K562 (cell line): ENCODE measurements at regions of chr20 and their contacts with region 1.

Region 1: DNA sequence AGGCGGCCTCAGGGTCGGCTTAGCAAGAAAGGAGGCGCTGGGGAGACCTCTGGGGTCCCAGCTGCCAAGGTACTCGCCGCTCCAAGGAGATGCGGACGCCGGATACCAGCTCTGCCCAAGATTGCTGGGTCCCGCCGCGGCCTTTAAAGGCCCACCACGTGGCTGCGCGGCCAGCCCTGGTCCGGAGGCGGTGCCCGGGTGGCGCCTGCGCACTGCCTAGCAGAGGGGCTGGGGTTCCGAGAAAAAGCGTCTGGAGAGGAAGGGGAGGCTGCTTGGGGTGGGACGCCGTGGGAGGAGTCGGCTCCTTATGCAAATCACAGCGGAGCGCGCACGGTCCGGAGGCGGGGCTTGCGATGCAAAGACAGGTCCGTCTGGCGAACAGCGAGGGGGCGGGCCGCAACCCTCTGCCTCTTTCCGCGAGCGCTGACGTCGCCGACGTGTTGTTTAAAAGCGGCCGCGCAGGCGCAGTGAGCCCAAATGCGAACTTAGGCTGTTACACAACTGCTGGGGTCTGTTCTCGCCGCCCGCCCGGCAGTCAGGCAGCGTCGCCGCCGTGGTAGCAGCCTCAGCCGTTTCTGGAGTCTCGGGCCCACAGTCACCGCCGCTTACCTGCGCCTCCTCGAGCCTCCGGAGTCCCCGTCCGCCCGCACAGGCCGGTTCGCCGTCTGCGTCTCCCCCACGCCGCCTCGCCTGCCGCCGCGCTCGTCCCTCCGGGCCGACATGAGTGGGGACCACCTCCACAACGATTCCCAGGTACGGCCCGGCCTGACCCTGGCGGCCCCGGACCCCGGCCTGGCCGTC is at the start of gene TOP1:
- DNase-seq: peak; percentile 99 to 100 (median 99)
- ATAC-seq: peak; percentile 92
- H3K4me3 ChIP-seq: peak within 1 kb of the TSS; percentile 90
- H3K27ac ChIP-seq: peak within 1 kb of the TSS; percentile 90
- H3K4me1 ChIP-seq: peaks cover 18 to 29% of the 10 kb centered on the region in 2 experiments
- H3K27me3 ChIP-seq: no peaks in the 10 kb centered on the region
- CTCF ChIP-seq: no peak
- EP300 ChIP-seq: no peak
- POLR2A ChIP-seq: peak; percentile 93
- RAD21 ChIP-seq: no peak
- polyA plus RNA-seq, gene TOP1: 29.2 to 38.2 TPM

Region 2: GRCh38 chr20:40673426-40673825 is 355.1 kb before region 1 on chr20:
- CTCF ChIA-PET with region 1: no interaction called
- POLR2A ChIA-PET with region 1: no interaction called
- in situ Hi-C with region 1: no loop called
- intact Hi-C with region 1: no loop called
- DNase-seq: no peak
- ATAC-seq: no peak
- H3K4me3 ChIP-seq: no peak overlapping the region
- H3K27ac ChIP-seq: no peak overlapping the region
- H3K4me1 ChIP-seq: no peaks in the 10 kb centered on the region
- H3K27me3 ChIP-seq: peaks cover 0 to 2% of the 10 kb centered on the region in 2 experiments; a peak in 1 of 5 replicates
- CTCF ChIP-seq: no peak
- EP300 ChIP-seq: no peak
- POLR2A ChIP-seq: no peak
- RAD21 ChIP-seq: no peak

Region 3: GRCh38 chr20:40990542-40991120 is 37.9 kb before region 1 on chr20:
- CTCF ChIA-PET with region 1: no interaction called
- POLR2A ChIA-PET with region 1: interaction called, 9 read pairs
- in situ Hi-C with region 1: no loop called
- intact Hi-C with region 1: loop called (anchors 2 kb)
- DNase-seq: peak; percentile 60 to 90 (median 75)
- ATAC-seq: peak; percentile 99
- H3K4me3 ChIP-seq: no peak overlapping the region
- H3K27ac ChIP-seq: peak overlapping the region; percentile 30; the same call in 2 of the 3 replicates
- H3K4me1 ChIP-seq: peaks cover 13 to 15% of the 10 kb centered on the region in 2 experiments
- H3K27me3 ChIP-seq: no peaks in the 10 kb centered on the region
- CTCF ChIP-seq: peak; percentile 86 to 93 (median 93)
- EP300 ChIP-seq: 0 out of 2 replicates have a peak, but pooled peaks have one; percentile 28
- POLR2A ChIP-seq: no peak
- RAD21 ChIP-seq: peak; percentile 85 to 96

Region 4: GRCh38 chr20:41017390-41018042 is 11.0 kb before region 1 on chr20:
- CTCF ChIA-PET with region 1: no interaction called
- POLR2A ChIA-PET with region 1: interaction called, 11 read pairs
- in situ Hi-C with region 1: no loop called
- intact Hi-C with region 1: no loop called
- DNase-seq: no peak
- ATAC-seq: peak; percentile 50; the same call in 2 of the 3 replicates
- H3K4me3 ChIP-seq: no peak overlapping the region
- H3K27ac ChIP-seq: no peak overlapping the region
- H3K4me1 ChIP-seq: no peaks in the 10 kb centered on the region
- H3K27me3 ChIP-seq: no peaks in the 10 kb centered on the region
- CTCF ChIP-seq: no peak
- EP300 ChIP-seq: no peak
- POLR2A ChIP-seq: no peak
- RAD21 ChIP-seq: no peak

Region 5: GRCh38 chr20:41038878-41039404 is 10.4 kb after region 1 on chr20:
- CTCF ChIA-PET with region 1: no interaction called
- POLR2A ChIA-PET with region 1: interaction called, 125 read pairs
- in situ Hi-C with region 1: no loop called
- intact Hi-C with region 1: no loop called
- DNase-seq: no peak
- ATAC-seq: no peak
- H3K4me3 ChIP-seq: no peak overlapping the region
- H3K27ac ChIP-seq: no peak overlapping the region
- H3K4me1 ChIP-seq: peaks cover 12 to 23% of the 10 kb centered on the region in 2 experiments; a peak in 4 of 5 replicates
- H3K27me3 ChIP-seq: no peaks in the 10 kb centered on the region
- CTCF ChIP-seq: no peak
- EP300 ChIP-seq: no peak
- POLR2A ChIP-seq: no peak
- RAD21 ChIP-seq: no peak

Region 6: GRCh38 chr20:41047975-41048305 is 19.4 kb after region 1 on chr20:
- CTCF ChIA-PET with region 1: no interaction called
- POLR2A ChIA-PET with region 1: interaction called, 125 read pairs
- in situ Hi-C with region 1: no loop called
- intact Hi-C with region 1: loop called (anchors 2 kb)
- DNase-seq: no peak
- ATAC-seq: peak; percentile 27; the same call in 2 of the 3 replicates
- H3K4me3 ChIP-seq: no peak overlapping the region
- H3K27ac ChIP-seq: peak overlapping the region; percentile 82
- H3K4me1 ChIP-seq: peaks cover 21 to 80% of the 10 kb centered on the region in 2 experiments
- H3K27me3 ChIP-seq: no peaks in the 10 kb centered on the region
- CTCF ChIP-seq: no peak
- EP300 ChIP-seq: no peak
- POLR2A ChIP-seq: no peak
- RAD21 ChIP-seq: no peak

Region 7: GRCh38 chr20:41072190-41072863 is 43.8 kb after region 1 on chr20:
- CTCF ChIA-PET with region 1: no interaction called
- POLR2A ChIA-PET with region 1: interaction called, 4 read pairs
- in situ Hi-C with region 1: no loop called
- intact Hi-C with region 1: loop called (anchors 5 kb)
- DNase-seq: peak in 1 of 4 experiments; percentile 40
- ATAC-seq: peak; percentile 56
- H3K4me3 ChIP-seq: no peak overlapping the region
- H3K27ac ChIP-seq: peak overlapping the region; percentile 63
- H3K4me1 ChIP-seq: peaks cover 14 to 71% of the 10 kb centered on the region in 2 experiments
- H3K27me3 ChIP-seq: no peaks in the 10 kb centered on the region
- CTCF ChIP-seq: no peak
- EP300 ChIP-seq: no peak
- POLR2A ChIP-seq: no peak
- RAD21 ChIP-seq: no peak

Region 8: DNA sequence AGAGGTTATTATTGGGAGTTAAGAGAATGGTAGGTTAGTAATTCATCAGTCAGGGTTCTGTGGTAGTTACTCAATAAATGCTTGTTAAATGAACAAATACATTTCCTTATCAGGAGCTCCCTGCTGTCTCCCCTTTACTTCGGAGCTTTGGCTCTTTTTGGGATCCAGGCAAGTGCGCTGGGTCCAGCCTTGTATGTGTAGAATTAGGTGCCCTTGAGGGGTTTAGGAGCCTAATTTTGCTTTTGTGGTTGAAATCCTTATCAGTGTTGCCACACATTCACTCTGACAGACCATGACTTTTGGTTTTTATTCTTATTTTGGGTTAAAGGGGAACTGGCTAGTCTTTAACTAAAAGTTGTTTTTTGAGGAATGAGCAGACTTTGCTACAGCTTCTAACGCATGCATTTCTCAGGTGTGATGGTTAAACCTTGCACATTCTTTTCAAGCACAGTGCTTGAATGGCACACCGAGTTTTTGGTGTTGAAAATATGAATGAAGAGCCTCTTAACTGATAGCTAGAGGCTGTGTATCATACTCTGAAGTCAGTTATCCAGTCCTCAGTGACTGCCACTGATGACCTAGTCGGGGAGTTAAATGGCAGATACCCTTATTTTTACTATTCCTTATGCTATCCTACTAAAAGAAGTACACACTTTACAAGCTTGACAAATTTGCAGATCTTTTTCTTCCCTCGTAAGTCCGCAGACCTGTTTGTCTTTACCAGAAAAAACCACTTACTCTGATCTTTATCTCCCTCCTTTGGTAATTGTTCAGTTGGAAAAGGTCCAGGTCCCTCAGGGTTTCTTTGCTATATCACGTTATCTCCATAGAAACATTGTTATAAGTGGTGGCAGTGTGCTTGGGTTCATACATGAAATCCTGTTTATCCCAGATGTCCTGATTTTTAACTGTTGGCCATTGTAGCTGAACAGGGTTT is 58.1 kb after region 1 on chr20:
- CTCF ChIA-PET with region 1: no interaction called
- POLR2A ChIA-PET with region 1: interaction called, 3 read pairs
- in situ Hi-C with region 1: no loop called
- intact Hi-C with region 1: loop called (anchors 2 kb)
- DNase-seq: peak; percentile 35 to 85 (median 58)
- ATAC-seq: peak; percentile 95
- H3K4me3 ChIP-seq: no peak overlapping the region
- H3K27ac ChIP-seq: peak overlapping the region; percentile 78
- H3K4me1 ChIP-seq: peaks cover 9 to 17% of the 10 kb centered on the region in 2 experiments
- H3K27me3 ChIP-seq: no peaks in the 10 kb centered on the region
- CTCF ChIP-seq: no peak
- EP300 ChIP-seq: peak; percentile 82
- POLR2A ChIP-seq: no peak
- RAD21 ChIP-seq: no peak

Region 9: GRCh38 chr20:41205313-41205712 is 176.8 kb after region 1 on chr20:
- CTCF ChIA-PET with region 1: no interaction called
- POLR2A ChIA-PET with region 1: no interaction called
- in situ Hi-C with region 1: no loop called
- intact Hi-C with region 1: no loop called
- DNase-seq: no peak
- ATAC-seq: no peak
- H3K4me3 ChIP-seq: no peak overlapping the region
- H3K27ac ChIP-seq: no peak overlapping the region
- H3K4me1 ChIP-seq: no peaks in the 10 kb centered on the region
- H3K27me3 ChIP-seq: no peaks in the 10 kb centered on the region
- CTCF ChIP-seq: no peak
- EP300 ChIP-seq: no peak
- POLR2A ChIP-seq: no peak
- RAD21 ChIP-seq: no peak

Region 10: GRCh38 chr20:41245086-41245707 is 216.6 kb after region 1 on chr20:
- CTCF ChIA-PET with region 1: no interaction called
- POLR2A ChIA-PET with region 1: no interaction called
- in situ Hi-C with region 1: no loop called
- intact Hi-C with region 1: no loop called
- DNase-seq: no peak
- ATAC-seq: no peak
- H3K4me3 ChIP-seq: no peak overlapping the region
- H3K27ac ChIP-seq: no peak overlapping the region
- H3K4me1 ChIP-seq: peaks cover 0 to 2% of the 10 kb centered on the region in 2 experiments; a peak in 3 of 5 replicates
- H3K27me3 ChIP-seq: no peaks in the 10 kb centered on the region
- CTCF ChIP-seq: no peak
- EP300 ChIP-seq: no peak
- POLR2A ChIP-seq: no peak
- RAD21 ChIP-seq: no peak